Activated CD4-positive, alpha-beta memory T cell treated with anti-CD3 and anti-CD28 coated beads, Interleukin-2, amount 10 ng/mL, durations not matched to agents 7 days and 5 days (primary cell): ENCODE measurements at regions of chrX and their contacts with region 1.

Region 1: DNA sequence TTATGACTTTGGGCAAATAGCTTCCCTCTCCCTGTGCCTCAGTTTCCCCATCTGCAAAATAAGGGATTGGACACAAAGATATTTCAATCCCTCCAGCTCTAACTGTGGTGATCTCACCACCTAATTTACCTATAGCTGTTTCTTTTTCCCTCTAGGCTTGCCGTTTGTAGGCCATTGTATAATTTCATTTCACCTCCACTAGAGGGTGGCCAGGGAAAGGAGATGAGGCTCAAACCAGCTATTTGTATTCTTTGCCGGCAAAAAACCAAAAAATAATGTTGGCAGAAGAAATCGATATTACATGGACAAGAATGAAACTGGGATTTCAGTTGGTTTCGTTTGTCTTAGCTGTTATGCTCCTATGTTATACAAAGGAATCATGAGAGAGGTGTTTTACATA is 36.1 kb upstream of the DOCK11 start:
- DNase-seq: peak; percentile 18
- H3K4me3 Mint-ChIP-seq: no peak overlapping the region
- H3K27ac Mint-ChIP-seq: no peak overlapping the region
- H3K4me1 Mint-ChIP-seq: no peaks in the 10 kb centered on the region
- H3K27me3 Mint-ChIP-seq: no peaks in the 10 kb centered on the region

Region 2: DNA sequence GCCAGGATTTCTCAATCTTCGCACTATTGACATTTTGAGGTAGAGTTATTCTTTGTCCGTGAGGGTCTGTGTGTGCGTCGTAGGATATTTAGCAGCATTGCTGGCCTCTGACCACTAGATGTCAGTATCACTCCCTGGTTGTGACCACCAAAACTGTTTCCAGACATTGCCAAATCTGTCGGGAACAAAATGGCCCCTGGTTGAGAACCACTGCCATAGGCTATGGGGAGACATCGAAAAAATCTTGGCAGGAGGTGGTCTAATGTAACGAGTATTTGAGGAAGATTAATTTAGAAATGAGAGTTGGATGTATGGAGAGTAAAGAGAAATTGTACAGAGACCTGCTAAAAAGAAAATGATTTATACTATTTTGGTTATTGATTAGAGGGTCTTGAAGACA is 144.5 kb after region 1 on chrX:
- CTCF ChIA-PET with region 1: interaction called, 50 read pairs
- POLR2A ChIA-PET with region 1: no interaction called
- DNase-seq: peak; percentile 16
- H3K4me3 Mint-ChIP-seq: no peak overlapping the region
- H3K27ac Mint-ChIP-seq: no peak overlapping the region
- H3K4me1 Mint-ChIP-seq: peaks cover 6% of the 10 kb centered on the region
- H3K27me3 Mint-ChIP-seq: no peaks in the 10 kb centered on the region